B cell (primary cell): ENCODE measurements at regions of chr19 and their contacts with region 1.

Region 1: GRCh38 chr19:58558623-58559274 is 338 bp upstream of the UBE2M start:
- DNase-seq: peak; percentile 99
- ATAC-seq: peak; percentile 71
- H3K4me3 ChIP-seq: peak overlapping the region; percentile 57 to 95 (median 85)
- H3K4me3 Mint-ChIP-seq: peak overlapping the region; percentile 96
- H3K27ac ChIP-seq: peak overlapping the region; percentile 74 to 98
- H3K27ac Mint-ChIP-seq: peak overlapping the region; percentile 98
- H3K4me1 ChIP-seq: peaks cover 48 to 68% of the 10 kb centered on the region in 2 donors
- H3K4me1 Mint-ChIP-seq: peaks cover 80% of the 10 kb centered on the region
- H3K27me3 ChIP-seq: no peaks in the 10 kb centered on the region
- H3K27me3 Mint-ChIP-seq: no peaks in the 10 kb centered on the region
- CTCF ChIP-seq: no peak

Region 2: DNA sequence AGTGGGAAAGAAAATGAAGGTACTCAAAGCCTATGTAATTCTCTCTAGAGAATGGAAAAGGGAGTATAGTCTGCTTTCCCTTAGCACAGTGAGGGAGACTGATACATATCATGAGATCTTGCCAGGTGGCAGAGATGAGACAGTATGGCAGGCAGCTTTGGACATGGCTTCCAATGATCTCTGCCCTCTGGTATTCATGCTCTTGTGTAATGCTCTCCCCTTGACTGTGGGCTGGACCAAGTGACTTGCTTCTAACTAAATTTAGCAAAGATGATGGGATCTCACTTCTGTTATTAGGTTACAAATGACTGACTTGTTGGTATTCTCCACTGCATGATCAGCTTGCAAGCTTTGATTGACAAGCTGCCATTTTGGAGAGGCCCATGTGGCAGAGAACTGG is 129.0 kb before region 1 on chr19:
- CTCF ChIA-PET with region 1: no interaction called
- POLR2A ChIA-PET with region 1: no interaction called
- intact Hi-C with region 1: no loop called
- DNase-seq: no peak
- ATAC-seq: no peak
- H3K4me3 ChIP-seq: no peak overlapping the region
- H3K4me3 Mint-ChIP-seq: no peak overlapping the region
- H3K27ac ChIP-seq: no peak overlapping the region
- H3K27ac Mint-ChIP-seq: no peak overlapping the region
- H3K4me1 ChIP-seq: no peaks in the 10 kb centered on the region
- H3K4me1 Mint-ChIP-seq: no peaks in the 10 kb centered on the region
- H3K27me3 ChIP-seq: no peaks in the 10 kb centered on the region
- H3K27me3 Mint-ChIP-seq: no peaks in the 10 kb centered on the region
- CTCF ChIP-seq: no peak

Region 3: DNA sequence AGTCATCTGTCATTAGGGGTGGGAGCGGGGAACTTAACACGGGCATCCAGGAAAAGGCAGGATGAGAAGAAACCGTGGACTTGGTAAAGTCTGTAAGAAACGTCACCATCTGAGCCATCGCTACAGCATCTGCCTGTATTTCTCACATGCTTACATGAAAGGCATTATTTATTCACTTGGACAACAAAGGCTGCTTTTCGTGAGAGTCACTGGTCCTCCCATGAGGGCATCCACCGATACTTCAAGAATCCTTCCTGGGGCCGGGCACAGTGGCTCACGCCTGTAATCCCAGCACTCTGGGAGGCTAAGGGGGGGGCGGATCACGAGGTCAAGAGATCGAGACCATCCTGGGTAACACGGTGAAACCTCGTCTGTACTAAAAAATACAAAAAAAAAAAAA is 66.5 kb before region 1 on chr19:
- CTCF ChIA-PET with region 1: no interaction called
- POLR2A ChIA-PET with region 1: no interaction called
- intact Hi-C with region 1: no loop called
- DNase-seq: no peak
- ATAC-seq: no peak
- H3K4me3 ChIP-seq: no peak overlapping the region
- H3K4me3 Mint-ChIP-seq: no peak overlapping the region
- H3K27ac ChIP-seq: no peak overlapping the region
- H3K27ac Mint-ChIP-seq: no peak overlapping the region
- H3K4me1 ChIP-seq: no peaks in the 10 kb centered on the region
- H3K4me1 Mint-ChIP-seq: no peaks in the 10 kb centered on the region
- H3K27me3 ChIP-seq: no peaks in the 10 kb centered on the region
- H3K27me3 Mint-ChIP-seq: no peaks in the 10 kb centered on the region
- CTCF ChIP-seq: no peak

Region 4: GRCh38 chr19:58543826-58544590 is 14.7 kb before region 1 on chr19 and contains the start of gene TRIM28:
- CTCF ChIA-PET with region 1: interaction called, 13 read pairs
- POLR2A ChIA-PET with region 1: interaction called, 29 read pairs
- intact Hi-C with region 1: loop called (anchors 1 kb)
- DNase-seq: peak; percentile 100
- ATAC-seq: peak; percentile 84
- H3K4me3 ChIP-seq: peak within 1 kb of the TSS; percentile 67 to 87 (median 82)
- H3K4me3 Mint-ChIP-seq: peak within 1 kb of the TSS; percentile 97
- H3K27ac ChIP-seq: peak within 1 kb of the TSS; percentile 96
- H3K27ac Mint-ChIP-seq: peak within 1 kb of the TSS; percentile 99
- H3K4me1 ChIP-seq: peaks cover 17 to 31% of the 10 kb centered on the region in 2 donors
- H3K4me1 Mint-ChIP-seq: peaks cover 29% of the 10 kb centered on the region
- H3K27me3 ChIP-seq: peaks cover 0 to 14% (median 0%) of the 10 kb centered on the region in 4 experiments
- H3K27me3 Mint-ChIP-seq: peaks cover 15% of the 10 kb centered on the region
- CTCF ChIP-seq: no peak
- total RNA-seq, gene TRIM28: 370 and 394 TPM in 2 replicates